ENCODE measurements at regions of chr2 and their contacts with region 1.

Region 1: GRCh38 chr2:152255921-152256320 is 79.1 kb upstream of the FMNL2 start:
- DNase-seq: no peak
- H3K4me3 ChIP-seq: no peak overlapping the region
- H3K27ac ChIP-seq: no peak overlapping the region
- H3K4me1 ChIP-seq: no peaks in the 10 kb centered on the region
- H3K27me3 ChIP-seq: no peaks in the 10 kb centered on the region
- CTCF ChIP-seq: no peak
- EP300 ChIP-seq: no peak
- POLR2A ChIP-seq: no peak

Region 2: DNA sequence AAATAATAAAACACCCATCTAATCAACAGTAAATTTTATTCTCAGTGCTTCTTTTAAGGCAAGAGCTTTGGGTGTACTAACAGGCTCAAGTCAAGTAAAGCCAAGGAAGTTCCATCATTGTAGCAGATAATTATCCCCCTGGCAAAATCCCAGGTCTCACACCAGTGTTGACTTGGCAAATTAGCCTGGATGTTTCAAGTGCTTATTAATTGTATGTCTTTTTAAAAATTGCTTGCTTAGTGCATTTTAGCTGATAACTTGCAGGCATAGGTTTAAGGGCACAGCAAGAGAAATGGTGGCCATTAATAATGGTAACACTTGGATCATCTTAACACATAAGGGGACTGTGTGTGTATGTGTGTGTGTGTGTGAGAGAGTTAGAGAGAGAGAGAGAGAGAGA is 37.1 kb after region 1 on chr2:
- in situ Hi-C with region 1: no loop called
- intact Hi-C with region 1: loop called (anchors 1 kb)
- DNase-seq: no peak
- H3K4me3 ChIP-seq: no peak overlapping the region
- H3K27ac ChIP-seq: no peak overlapping the region
- H3K4me1 ChIP-seq: no peaks in the 10 kb centered on the region
- H3K27me3 ChIP-seq: no peaks in the 10 kb centered on the region
- CTCF ChIP-seq: no peak
- EP300 ChIP-seq: no peak
- POLR2A ChIP-seq: no peak

Measured in transverse colon (tissue), 4 donors.